Activated B cell treated with CpG ODN at 0.5 μM for 24 hours (primary cell): ENCODE measurements at regions of chr17 and their contacts with region 1.

Region 1: DNA sequence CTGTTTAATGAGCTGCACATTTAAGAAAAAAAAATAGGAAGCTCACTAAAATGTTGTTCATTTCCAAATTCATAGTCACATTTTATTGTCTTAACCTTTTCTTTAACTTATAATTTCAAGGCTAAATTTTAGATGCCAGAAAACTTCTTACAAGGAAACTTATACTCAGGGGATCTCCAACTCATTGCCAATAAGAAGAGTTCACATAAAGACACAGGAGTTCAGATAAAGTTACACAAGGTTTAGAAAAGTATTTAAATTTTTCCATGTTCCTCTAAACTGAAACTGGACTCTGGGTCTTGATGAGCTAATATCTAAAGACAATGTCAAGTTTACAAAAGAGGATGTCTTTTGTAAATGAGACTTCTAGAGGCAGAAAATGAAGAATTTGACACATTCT is 190.7 kb upstream of the KCNJ16 start:
- DNase-seq: no peak
- ATAC-seq: no peak
- H3K4me3 Mint-ChIP-seq: no peak overlapping the region
- H3K27ac Mint-ChIP-seq: no peak overlapping the region
- H3K4me1 Mint-ChIP-seq: no peaks in the 10 kb centered on the region
- H3K27me3 Mint-ChIP-seq: no peaks in the 10 kb centered on the region
- CTCF ChIP-seq: no peak

Region 2: GRCh38 chr17:69945698-69946185 is 61.4 kb after region 1 on chr17:
- CTCF ChIA-PET with region 1: no interaction called
- POLR2A ChIA-PET with region 1: no interaction called
- intact Hi-C with region 1: loop called (anchors 10 kb)
- DNase-seq: no peak
- ATAC-seq: no peak
- H3K4me3 Mint-ChIP-seq: no peak overlapping the region
- H3K27ac Mint-ChIP-seq: no peak overlapping the region
- H3K4me1 Mint-ChIP-seq: no peaks in the 10 kb centered on the region
- H3K27me3 Mint-ChIP-seq: no peaks in the 10 kb centered on the region
- CTCF ChIP-seq: no peak